ENCODE measurements at regions of chr17 and their contacts with region 1.

Region 1: GRCh38 chr17:82655038-82655479 is 6.8 kb upstream of the WDR45B start:
- DNase-seq: peak; percentile 59 to 73 (median 62)
- ATAC-seq: peak; percentile 77
- H3K4me3 ChIP-seq: no peak overlapping the region
- H3K4me1 ChIP-seq: peaks cover 15% of the 10 kb centered on the region
- CTCF ChIP-seq: no peak

Region 2: DNA sequence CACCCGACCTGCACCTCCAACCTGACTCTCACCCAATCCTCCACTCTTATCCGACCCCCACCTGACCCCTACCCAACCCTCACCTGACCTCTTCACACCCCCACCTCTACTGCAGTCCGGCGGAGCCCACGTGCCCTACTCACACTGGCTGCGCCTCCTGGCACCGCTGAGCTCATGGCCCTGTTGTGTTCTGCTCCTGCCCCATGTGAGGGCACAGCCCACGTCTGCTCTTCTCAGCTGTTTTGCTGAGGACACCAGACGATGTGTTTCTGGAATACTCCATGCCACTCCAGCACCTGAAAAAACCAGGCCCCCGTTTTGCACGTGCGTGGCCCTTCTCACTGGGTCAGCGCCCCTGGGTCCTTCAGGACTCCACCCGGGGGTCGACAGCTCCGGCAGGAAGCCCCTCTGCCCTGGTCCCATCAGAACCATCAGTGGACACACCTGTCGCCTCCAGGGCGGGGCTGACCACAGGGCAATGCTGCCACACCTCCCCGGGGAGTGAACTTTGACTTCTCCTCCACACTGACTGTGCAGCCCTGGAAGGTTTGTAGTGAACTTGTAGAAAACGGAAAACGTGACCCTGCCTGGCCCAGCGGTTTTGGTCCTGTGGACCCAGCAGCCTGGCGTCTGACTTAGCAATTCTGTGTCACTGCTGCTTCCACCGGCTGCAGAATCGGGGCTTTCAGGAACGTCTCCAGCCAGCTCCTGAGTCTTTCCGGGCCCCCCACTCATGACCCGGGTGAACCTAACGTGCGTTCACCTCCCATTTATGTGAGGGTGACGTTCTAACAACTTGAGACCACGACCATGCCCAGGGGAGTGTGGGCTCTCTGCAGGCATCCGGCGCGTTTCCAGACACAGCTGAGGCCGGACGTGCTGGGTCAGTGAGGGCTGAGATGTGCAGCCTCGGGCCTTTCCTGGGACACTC is 49.1 kb after region 1 on chr17:
- intact Hi-C with region 1: loop called in 1 of 2 experiments (anchors 2 kb)
- DNase-seq: peak; percentile 87 to 95 (median 88)
- ATAC-seq: peak; percentile 83
- H3K4me3 ChIP-seq: no peak overlapping the region
- H3K4me1 ChIP-seq: peaks cover 29% of the 10 kb centered on the region
- CTCF ChIP-seq: no peak